K562 (cell line): ENCODE measurements at regions of chr1 and their contacts with region 1.

Region 1: DNA sequence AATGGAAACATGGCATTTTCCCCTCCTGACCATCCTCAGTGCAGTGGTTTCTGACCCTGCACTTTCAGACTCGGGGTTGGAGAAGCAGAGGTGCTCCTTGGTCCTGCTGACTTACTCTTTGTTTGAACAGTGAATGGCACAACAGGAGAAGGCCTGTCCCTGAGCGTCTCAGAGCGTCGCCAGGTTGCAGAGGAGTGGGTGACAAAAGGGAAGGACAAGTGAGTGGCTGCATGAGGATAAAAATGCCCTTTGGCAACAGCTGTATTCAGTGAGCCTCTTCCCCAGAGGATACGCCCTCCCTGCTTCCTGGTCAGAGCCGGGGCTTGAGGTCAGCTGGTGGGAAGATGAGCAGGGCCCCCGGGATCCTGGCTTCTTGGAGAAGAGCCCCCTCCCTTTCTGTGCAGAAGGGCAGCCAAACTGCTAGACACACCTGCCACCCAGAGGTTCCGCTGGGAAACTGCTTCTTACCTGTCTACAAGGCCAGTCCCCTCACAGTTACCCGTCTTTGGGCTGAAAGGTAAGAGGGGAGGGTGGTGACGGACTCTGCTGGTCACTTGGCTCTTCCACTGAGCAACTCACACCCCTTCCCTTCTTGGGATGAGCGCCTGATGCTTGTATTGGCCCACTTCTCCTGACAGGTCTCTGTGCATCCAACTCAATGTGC is 16.6 kb downstream of the NPL start:
- DNase-seq: peak; percentile 47 to 68 (median 54)
- ATAC-seq: peak; percentile 94
- H3K4me3 ChIP-seq: no peak overlapping the region
- H3K27ac ChIP-seq: no peak overlapping the region
- H3K4me1 ChIP-seq: no peaks in the 10 kb centered on the region
- H3K27me3 ChIP-seq: no peaks in the 10 kb centered on the region
- CTCF ChIP-seq: peak; percentile 74 to 78 (median 77)
- EP300 ChIP-seq: no peak
- POLR2A ChIP-seq: no peak
- RAD21 ChIP-seq: peak in 1 of 2 experiments; percentile 81; a peak in 3 of 4 replicates

Region 2: GRCh38 chr1:182446033-182446669 is 360.0 kb before region 1 on chr1:
- CTCF ChIA-PET with region 1: no interaction called
- POLR2A ChIA-PET with region 1: no interaction called
- in situ Hi-C with region 1: no loop called
- intact Hi-C with region 1: loop called (anchors 1 kb)
- DNase-seq: peak; percentile 63 to 77 (median 69)
- ATAC-seq: peak; percentile 89
- H3K4me3 ChIP-seq: no peak overlapping the region
- H3K27ac ChIP-seq: no peak overlapping the region
- H3K4me1 ChIP-seq: no peaks in the 10 kb centered on the region; a peak in 1 of 5 replicates
- H3K27me3 ChIP-seq: peaks cover 0 to 6% of the 10 kb centered on the region in 2 experiments; a peak in 3 of 5 replicates
- CTCF ChIP-seq: peak; percentile 74 to 89 (median 81)
- EP300 ChIP-seq: no peak
- POLR2A ChIP-seq: no peak
- RAD21 ChIP-seq: peak; percentile 90 to 98

Region 3: DNA sequence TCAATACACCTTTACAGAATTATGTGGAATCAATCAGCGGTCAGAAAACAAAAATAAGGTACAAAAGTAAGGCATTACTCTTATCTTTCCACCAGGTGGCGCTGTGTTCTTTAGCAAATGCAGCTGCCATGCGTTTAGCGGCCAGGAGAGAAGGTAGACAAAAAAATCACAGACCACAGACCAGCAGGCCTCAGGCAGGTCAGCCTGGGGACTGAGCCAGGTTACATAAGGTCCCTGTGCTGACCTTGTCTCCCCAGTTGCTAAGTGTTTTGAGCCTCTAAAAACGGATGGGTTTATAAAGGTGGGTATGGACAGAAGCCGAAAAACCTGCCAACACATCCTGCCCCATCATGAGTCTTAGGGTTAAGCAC is 204.7 kb before region 1 on chr1:
- CTCF ChIA-PET with region 1: interaction called, 27 read pairs
- POLR2A ChIA-PET with region 1: no interaction called
- in situ Hi-C with region 1: no loop called
- intact Hi-C with region 1: loop called (anchors 1 kb)
- DNase-seq: peak; percentile 69 to 90 (median 75)
- ATAC-seq: peak; percentile 48
- H3K4me3 ChIP-seq: no peak overlapping the region
- H3K27ac ChIP-seq: no peak overlapping the region
- H3K4me1 ChIP-seq: peaks cover 9 to 13% of the 10 kb centered on the region in 2 experiments; a peak in 4 of 5 replicates
- H3K27me3 ChIP-seq: peaks cover 2 to 21% of the 10 kb centered on the region in 2 experiments; a peak in 3 of 5 replicates
- CTCF ChIP-seq: peak; percentile 89 to 96 (median 90)
- EP300 ChIP-seq: no peak
- POLR2A ChIP-seq: no peak
- RAD21 ChIP-seq: peak; percentile 98 to 99

Region 4: DNA sequence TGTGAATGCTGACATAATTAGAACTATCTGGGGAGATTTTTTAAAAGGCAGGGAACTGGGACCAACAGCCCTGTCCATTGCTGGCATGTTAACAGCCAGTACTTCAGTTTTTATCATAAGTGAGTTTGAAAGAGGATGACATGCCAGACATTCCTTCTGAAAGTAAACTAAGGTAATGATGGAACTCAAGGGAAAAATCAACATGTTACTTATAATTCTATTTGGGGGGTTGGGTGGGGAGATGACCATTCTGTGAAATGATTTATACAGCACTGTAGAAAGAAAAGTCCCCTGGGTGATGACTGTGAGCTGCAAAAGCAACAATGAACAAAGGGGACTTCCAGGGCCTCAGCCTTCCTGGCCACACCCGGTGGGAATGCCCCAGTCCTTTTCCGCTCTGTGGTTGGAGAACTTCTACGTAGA is 374.5 kb after region 1 on chr1:
- CTCF ChIA-PET with region 1: no interaction called
- POLR2A ChIA-PET with region 1: no interaction called
- in situ Hi-C with region 1: no loop called
- intact Hi-C with region 1: no loop called
- DNase-seq: no peak
- ATAC-seq: no peak
- H3K4me3 ChIP-seq: no peak overlapping the region
- H3K27ac ChIP-seq: no peak overlapping the region
- H3K4me1 ChIP-seq: no peaks in the 10 kb centered on the region
- H3K27me3 ChIP-seq: peaks cover 2 to 9% of the 10 kb centered on the region in 2 experiments
- CTCF ChIP-seq: no peak
- EP300 ChIP-seq: no peak
- POLR2A ChIP-seq: no peak
- RAD21 ChIP-seq: no peak